ENCODE measurements at regions of chr19 and their contacts with region 1.

Region 1: GRCh38 chr19:45485305-45486077 is 11.4 kb downstream of the RTN2 start:
- DNase-seq: peak; percentile 71
- ATAC-seq: peak; percentile 99
- H3K4me3 ChIP-seq: peak overlapping the region; percentile 74
- H3K27ac ChIP-seq: 0 out of 2 replicates have a peak overlapping the region, but pooled peaks have one; percentile 40
- H3K4me1 ChIP-seq: 0 out of 2 replicates have a peak, but pooled peaks cover 3% of the 10 kb centered on the region
- H3K27me3 ChIP-seq: no peaks in the 10 kb centered on the region
- CTCF ChIP-seq: peak; percentile 91 to 98 (median 96)
- EP300 ChIP-seq: no peak
- POLR2A ChIP-seq: no peak
- RAD21 ChIP-seq: peak; percentile 60

Region 2: DNA sequence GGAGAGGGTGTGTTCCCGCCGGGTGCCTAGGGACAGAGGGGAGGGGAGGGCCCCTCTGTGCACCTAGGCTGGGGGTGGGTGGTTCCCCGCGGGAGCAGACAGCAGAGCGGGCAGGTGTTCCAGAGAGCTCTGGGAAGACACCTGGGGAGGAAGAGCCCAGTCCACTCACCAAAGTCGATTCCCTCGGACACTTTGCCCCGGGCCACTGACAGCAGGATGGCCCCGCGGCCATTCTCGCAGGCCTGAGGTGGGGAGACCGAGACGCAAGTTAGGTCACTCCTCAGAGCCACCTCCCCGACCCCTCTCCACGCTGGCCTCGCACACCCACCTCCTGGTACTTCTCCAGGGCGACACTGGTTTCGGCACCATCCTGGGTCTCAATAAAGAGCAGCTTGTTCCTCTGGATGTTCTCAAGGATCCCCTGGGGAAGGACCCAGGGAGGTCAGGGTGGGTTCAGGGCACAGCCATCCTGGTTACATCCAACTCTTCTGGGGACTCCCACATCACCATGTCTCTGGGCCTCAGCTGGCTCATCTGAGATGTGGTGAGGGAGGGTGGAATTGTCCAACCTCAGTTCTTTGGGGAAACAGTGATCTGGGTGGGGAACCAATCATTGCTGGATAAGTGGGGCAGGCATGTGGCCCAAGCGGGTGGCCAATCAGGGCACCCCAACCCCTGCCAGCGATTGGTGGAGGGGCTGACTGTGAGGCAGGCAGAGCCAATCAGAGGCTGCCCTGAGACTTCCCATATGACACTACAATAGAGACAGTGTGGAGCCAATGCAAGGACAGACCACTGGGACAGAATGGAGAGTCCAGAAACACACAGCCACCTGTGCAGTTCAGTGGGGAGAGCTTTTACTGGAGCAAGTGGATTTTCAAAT is 132.3 kb before region 1 on chr19:
- CTCF ChIA-PET with region 1: no interaction called
- POLR2A ChIA-PET with region 1: no interaction called
- RAD21 ChIA-PET with region 1: no interaction called
- SMC1A ChIA-PET with region 1: no interaction called
- in situ Hi-C with region 1: no loop called
- intact Hi-C with region 1: no loop called
- DNase-seq: no peak
- ATAC-seq: peak; percentile 27; the same call in 2 of the 3 replicates
- H3K4me3 ChIP-seq: no peak overlapping the region
- H3K27ac ChIP-seq: no peak overlapping the region
- H3K4me1 ChIP-seq: no peaks in the 10 kb centered on the region
- H3K27me3 ChIP-seq: no peaks in the 10 kb centered on the region
- CTCF ChIP-seq: no peak
- EP300 ChIP-seq: no peak
- POLR2A ChIP-seq: no peak
- RAD21 ChIP-seq: no peak

Region 3: GRCh38 chr19:45405435-45406225 is 79.9 kb before region 1 on chr19:
- CTCF ChIA-PET with region 1: interaction called, 36 read pairs
- POLR2A ChIA-PET with region 1: interaction called, 3 read pairs
- RAD21 ChIA-PET with region 1: interaction called, 9 read pairs
- SMC1A ChIA-PET with region 1: interaction called, 16 read pairs
- in situ Hi-C with region 1: no loop called
- intact Hi-C with region 1: no loop called
- DNase-seq: peak; percentile 30
- ATAC-seq: peak; percentile 77
- H3K4me3 ChIP-seq: peak overlapping the region; percentile 98
- H3K27ac ChIP-seq: peak overlapping the region; percentile 89
- H3K4me1 ChIP-seq: peaks cover 4% of the 10 kb centered on the region
- H3K27me3 ChIP-seq: no peaks in the 10 kb centered on the region; a peak in 1 of 4 replicates
- CTCF ChIP-seq: no peak
- EP300 ChIP-seq: no peak
- POLR2A ChIP-seq: peak; percentile 45; the same call in 1 of the 2 replicates
- RAD21 ChIP-seq: no peak

Region 4: DNA sequence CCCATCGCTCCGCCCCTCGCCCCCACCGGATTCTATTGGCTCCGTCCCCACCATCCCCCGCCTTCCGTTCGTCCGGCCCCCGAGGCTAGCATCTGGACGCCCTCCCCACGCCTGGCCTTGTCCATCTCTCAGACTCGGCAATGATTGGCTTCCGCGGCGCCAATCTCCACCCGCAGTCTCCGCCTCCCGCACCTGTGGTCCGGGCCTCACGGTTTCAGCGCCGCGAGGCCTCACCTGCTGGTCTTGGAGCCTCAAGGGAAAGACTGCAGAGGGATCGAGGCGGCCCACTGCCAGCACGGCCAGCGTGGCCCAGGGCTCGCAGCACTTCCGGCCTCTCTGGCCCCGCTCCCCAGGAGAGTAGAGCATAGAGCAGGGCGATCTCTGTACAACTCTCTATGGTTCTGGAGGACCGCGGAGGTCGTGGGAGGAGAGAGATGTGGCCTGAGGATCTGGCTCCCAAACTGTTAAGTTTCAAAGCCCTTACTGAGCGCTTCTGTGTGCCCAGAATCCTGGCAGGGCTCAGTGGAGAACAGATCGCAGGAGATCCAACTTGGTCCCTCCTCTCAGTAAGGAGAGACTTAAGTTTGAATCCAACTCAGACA is 61.8 kb before region 1 on chr19 and contains the start of gene ERCC1:
- CTCF ChIA-PET with region 1: interaction called, 103 read pairs
- POLR2A ChIA-PET with region 1: interaction called, 7 read pairs
- RAD21 ChIA-PET with region 1: interaction called, 20 read pairs
- SMC1A ChIA-PET with region 1: interaction called, 6 read pairs
- in situ Hi-C with region 1: no loop called
- intact Hi-C with region 1: no loop called
- DNase-seq: peak; percentile 89
- ATAC-seq: peak; percentile 83
- H3K4me3 ChIP-seq: peak within 1 kb of the TSS; percentile 82
- H3K27ac ChIP-seq: peak within 1 kb of the TSS; percentile 91
- H3K4me1 ChIP-seq: peaks cover 35% of the 10 kb centered on the region
- H3K27me3 ChIP-seq: no peaks in the 10 kb centered on the region
- CTCF ChIP-seq: no peak
- EP300 ChIP-seq: no peak
- POLR2A ChIP-seq: peak; percentile 93
- RAD21 ChIP-seq: no peak
- polyA plus RNA-seq, gene ERCC1: 14.7 to 36.8 TPM

Region 5: DNA sequence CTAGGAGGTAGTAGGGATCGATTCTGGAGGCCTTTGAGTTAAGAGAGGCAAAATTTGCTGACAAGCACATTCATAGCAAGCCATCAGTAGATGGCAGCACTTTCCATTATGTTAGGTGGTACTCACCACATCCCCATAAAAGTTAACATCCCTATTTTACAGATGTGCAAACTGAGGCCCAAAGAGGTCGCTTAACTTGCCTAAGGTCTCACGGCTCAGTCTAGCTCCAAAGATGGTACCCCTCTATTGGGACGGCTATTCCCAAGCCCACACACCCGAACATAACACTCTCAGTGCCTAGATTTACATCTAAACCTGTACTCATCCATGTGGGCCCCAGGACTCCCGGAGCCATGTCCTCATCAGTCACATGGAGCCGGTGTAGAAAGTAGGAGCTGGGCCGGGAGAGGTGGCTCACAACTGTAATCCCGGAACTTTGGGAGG is 39.1 kb before region 1 on chr19:
- CTCF ChIA-PET with region 1: interaction called, 385 read pairs
- POLR2A ChIA-PET with region 1: no interaction called
- RAD21 ChIA-PET with region 1: interaction called, 206 read pairs
- SMC1A ChIA-PET with region 1: interaction called, 145 read pairs
- in situ Hi-C with region 1: no loop called
- intact Hi-C with region 1: no loop called
- DNase-seq: no peak
- ATAC-seq: no peak
- H3K4me3 ChIP-seq: no peak overlapping the region
- H3K27ac ChIP-seq: no peak overlapping the region
- H3K4me1 ChIP-seq: peaks cover 29% of the 10 kb centered on the region
- H3K27me3 ChIP-seq: no peaks in the 10 kb centered on the region
- CTCF ChIP-seq: peak; percentile 53 to 64 (median 60)
- EP300 ChIP-seq: no peak
- POLR2A ChIP-seq: no peak
- RAD21 ChIP-seq: no peak

Region 6: GRCh38 chr19:45469132-45469944 is 16.2 kb before region 1 on chr19:
- CTCF ChIA-PET with region 1: interaction called, 34 read pairs
- POLR2A ChIA-PET with region 1: interaction called, 10 read pairs
- RAD21 ChIA-PET with region 1: interaction called, 8 read pairs
- SMC1A ChIA-PET with region 1: interaction called, 4 read pairs
- in situ Hi-C with region 1: no loop called
- intact Hi-C with region 1: no loop called
- DNase-seq: peak; percentile 78
- ATAC-seq: peak; percentile 87
- H3K4me3 ChIP-seq: peak overlapping the region; percentile 82
- H3K27ac ChIP-seq: peak overlapping the region; percentile 91
- H3K4me1 ChIP-seq: peaks cover 14% of the 10 kb centered on the region
- H3K27me3 ChIP-seq: peaks cover 0 to 2% of the 10 kb centered on the region in 2 experiments; a peak in 2 of 4 replicates
- CTCF ChIP-seq: no peak
- EP300 ChIP-seq: peak in 1 of 2 experiments; percentile 11; a peak in 1 of 4 replicates
- POLR2A ChIP-seq: peak; percentile 79
- RAD21 ChIP-seq: no peak

Region 7: DNA sequence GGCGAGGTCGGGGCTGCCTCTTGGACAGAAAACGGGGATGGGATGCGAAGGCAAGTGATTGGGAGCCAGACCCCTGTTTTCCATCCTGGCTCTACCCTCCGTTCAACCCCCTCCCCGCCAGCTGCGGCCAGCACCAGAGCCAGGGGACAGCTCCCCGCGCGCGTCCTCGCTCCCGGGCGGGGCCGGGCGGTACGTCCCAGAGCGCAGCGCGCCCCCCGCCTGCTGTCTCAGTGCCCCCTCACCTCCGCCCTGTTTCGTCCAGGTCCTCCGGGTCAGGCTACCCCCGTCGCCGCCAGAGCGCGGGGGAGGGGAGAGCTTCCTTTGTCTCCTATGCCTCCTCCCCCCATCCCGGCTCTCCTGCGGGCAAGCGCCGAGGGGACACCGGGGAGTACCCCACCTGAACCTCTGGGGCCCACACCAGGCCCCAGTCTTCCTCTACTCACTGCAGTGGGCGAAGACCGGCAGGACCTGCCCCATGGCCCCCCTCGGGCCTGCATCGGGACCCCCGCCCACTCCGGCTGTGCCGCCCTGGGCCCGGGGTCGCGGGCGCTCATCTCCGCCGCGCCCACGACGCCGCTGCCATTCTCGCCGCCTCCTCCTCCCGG is 11.0 kb after region 1 on chr19:
- CTCF ChIA-PET with region 1: interaction called, 65 read pairs
- POLR2A ChIA-PET with region 1: interaction called, 6 read pairs
- RAD21 ChIA-PET with region 1: interaction called, 9 read pairs
- SMC1A ChIA-PET with region 1: interaction called, 8 read pairs
- in situ Hi-C with region 1: no loop called
- intact Hi-C with region 1: no loop called
- DNase-seq: no peak
- ATAC-seq: no peak
- H3K4me3 ChIP-seq: peak overlapping the region; percentile 55; the same call in 1 of the 2 replicates
- H3K27ac ChIP-seq: no peak overlapping the region
- H3K4me1 ChIP-seq: peaks cover 22% of the 10 kb centered on the region
- H3K27me3 ChIP-seq: peaks cover 0 to 9% of the 10 kb centered on the region in 2 experiments; a peak in 3 of 4 replicates
- CTCF ChIP-seq: no peak
- EP300 ChIP-seq: no peak
- POLR2A ChIP-seq: no peak; the same call in 1 of the 2 replicates
- RAD21 ChIP-seq: no peak

Region 8: DNA sequence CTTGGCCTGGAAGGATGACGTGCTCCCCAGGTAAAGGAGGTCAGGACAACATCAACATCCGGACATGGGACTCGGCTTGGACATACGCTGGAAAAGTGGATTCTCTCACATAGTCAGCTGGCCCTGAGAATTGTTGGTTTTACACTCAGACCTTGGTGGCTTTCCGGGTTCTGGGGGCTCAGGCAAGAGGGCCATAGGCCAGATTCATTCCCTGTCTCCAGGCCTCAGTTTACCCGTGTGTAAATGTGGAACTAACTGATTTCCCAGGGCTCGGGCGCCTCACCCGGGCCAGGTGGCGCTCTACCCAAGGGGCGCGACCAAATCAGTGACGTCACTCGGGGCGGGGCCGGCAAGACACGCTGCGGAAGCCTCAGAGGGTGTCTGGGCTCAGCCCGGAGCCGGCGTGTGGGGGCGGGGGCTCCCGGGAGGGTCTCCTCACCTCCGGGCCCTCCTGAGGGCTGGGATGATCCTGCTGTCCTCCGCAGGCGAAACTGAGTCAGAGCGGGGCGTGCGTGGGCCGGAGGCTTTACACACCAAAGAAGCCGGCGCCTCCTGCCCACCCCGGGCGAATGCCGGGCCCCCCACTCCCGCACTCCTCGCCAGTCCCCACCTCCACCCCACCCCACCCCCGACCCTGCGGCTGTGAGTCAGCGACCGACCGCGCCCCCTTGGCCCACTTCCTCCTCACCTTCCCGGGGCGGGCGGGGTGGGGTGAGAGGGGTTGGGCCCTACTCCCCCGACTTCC is 20.9 kb after region 1 on chr19:
- CTCF ChIA-PET with region 1: interaction called, 28 read pairs
- POLR2A ChIA-PET with region 1: interaction called, 3 read pairs
- RAD21 ChIA-PET with region 1: interaction called, 4 read pairs
- SMC1A ChIA-PET with region 1: interaction called, 4 read pairs
- in situ Hi-C with region 1: no loop called
- intact Hi-C with region 1: no loop called
- DNase-seq: peak; percentile 64
- ATAC-seq: peak; percentile 74
- H3K4me3 ChIP-seq: peak overlapping the region; percentile 99
- H3K27ac ChIP-seq: peak overlapping the region; percentile 98
- H3K4me1 ChIP-seq: peaks cover 21% of the 10 kb centered on the region
- H3K27me3 ChIP-seq: no peaks in the 10 kb centered on the region
- CTCF ChIP-seq: peak; percentile 56 to 79 (median 70)
- EP300 ChIP-seq: peak in 1 of 2 experiments; percentile 35; a peak in 1 of 4 replicates
- POLR2A ChIP-seq: peak; percentile 87
- RAD21 ChIP-seq: peak; percentile 46; the same call in 1 of the 2 replicates

Measured in GM12878 (cell line).